K562 (cell line): ENCODE measurements at regions of chr22 and their contacts with region 1.

Region 1: GRCh38 chr22:38524429-38524828 is 18.3 kb upstream of the DDX17 start:
- DNase-seq: no peak
- ATAC-seq: peak; percentile 51; the same call in 2 of the 3 replicates
- H3K4me3 ChIP-seq: no peak overlapping the region
- H3K27ac ChIP-seq: peak overlapping the region; percentile 52; the same call in 2 of the 3 replicates
- H3K4me1 ChIP-seq: no peaks in the 10 kb centered on the region; a peak in 2 of 5 replicates
- H3K27me3 ChIP-seq: no peaks in the 10 kb centered on the region
- CTCF ChIP-seq: no peak
- EP300 ChIP-seq: no peak
- POLR2A ChIP-seq: no peak
- RAD21 ChIP-seq: no peak

Region 2: GRCh38 chr22:38497869-38498268 is 26.6 kb before region 1 on chr22:
- CTCF ChIA-PET with region 1: no interaction called
- POLR2A ChIA-PET with region 1: no interaction called
- in situ Hi-C with region 1: no loop called
- intact Hi-C with region 1: no loop called
- DNase-seq: no peak
- ATAC-seq: no peak
- H3K4me3 ChIP-seq: no peak overlapping the region
- H3K27ac ChIP-seq: no peak overlapping the region
- H3K4me1 ChIP-seq: peaks cover 0 to 8% of the 10 kb centered on the region in 2 experiments; a peak in 3 of 5 replicates
- H3K27me3 ChIP-seq: no peaks in the 10 kb centered on the region
- CTCF ChIP-seq: no peak
- EP300 ChIP-seq: no peak
- POLR2A ChIP-seq: no peak
- RAD21 ChIP-seq: no peak

Region 3: DNA sequence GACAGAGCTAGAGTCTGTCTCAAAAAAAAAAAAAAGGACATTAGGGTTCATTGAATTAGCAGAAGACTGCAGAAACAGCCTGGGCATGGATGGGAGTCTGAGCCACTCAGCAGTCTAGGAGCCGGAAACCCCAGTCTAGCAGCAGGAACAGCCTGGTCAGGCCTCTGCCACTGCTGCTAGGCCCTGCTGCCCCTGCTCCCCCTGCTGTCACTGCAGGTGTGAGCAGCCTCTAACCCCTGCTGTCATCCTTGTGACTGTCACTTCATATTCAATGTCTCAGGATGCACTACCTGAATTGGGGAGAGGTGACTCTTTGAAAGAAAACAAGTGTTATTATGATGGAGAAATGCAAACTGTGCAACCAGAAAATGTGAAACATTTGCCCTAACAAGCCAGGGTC is 11.4 kb before region 1 on chr22:
- CTCF ChIA-PET with region 1: no interaction called
- POLR2A ChIA-PET with region 1: interaction called, 11 read pairs
- in situ Hi-C with region 1: no loop called
- intact Hi-C with region 1: no loop called
- DNase-seq: peak; percentile 29 to 63 (median 46)
- ATAC-seq: peak; percentile 89
- H3K4me3 ChIP-seq: no peak overlapping the region
- H3K27ac ChIP-seq: no peak overlapping the region; the same call in 2 of the 3 replicates
- H3K4me1 ChIP-seq: peaks cover 21 to 35% of the 10 kb centered on the region in 2 experiments; a peak in 4 of 5 replicates
- H3K27me3 ChIP-seq: no peaks in the 10 kb centered on the region
- CTCF ChIP-seq: peak; percentile 45 to 64 (median 61)
- EP300 ChIP-seq: no peak
- POLR2A ChIP-seq: no peak
- RAD21 ChIP-seq: peak in 1 of 2 experiments; percentile 38; a peak in 2 of 4 replicates

Region 4: GRCh38 chr22:38705235-38706100 is 181.0 kb after region 1 on chr22 and contains the start of gene GTPBP1:
- CTCF ChIA-PET with region 1: no interaction called
- POLR2A ChIA-PET with region 1: no interaction called
- in situ Hi-C with region 1: no loop called
- intact Hi-C with region 1: no loop called
- DNase-seq: peak; percentile 85 to 98 (median 91)
- ATAC-seq: peak; percentile 88
- H3K4me3 ChIP-seq: peak within 1 kb of the TSS; percentile 94
- H3K27ac ChIP-seq: peak within 1 kb of the TSS; percentile 91
- H3K4me1 ChIP-seq: peaks cover 29 to 38% of the 10 kb centered on the region in 2 experiments; a peak in 4 of 5 replicates
- H3K27me3 ChIP-seq: no peaks in the 10 kb centered on the region
- CTCF ChIP-seq: peak in 1 of 3 experiments; percentile 17; a peak in 2 of 6 replicates
- EP300 ChIP-seq: 0 out of 2 replicates have a peak, but pooled peaks have one; percentile 51
- POLR2A ChIP-seq: peak; percentile 82
- RAD21 ChIP-seq: no peak
- polyA plus RNA-seq, gene GTPBP1: 0.83 to 0.95 TPM